HEK293 (cell line): ENCODE measurements at regions of chr2 and their contacts with region 1.

Region 1: GRCh38 chr2:190849774-190850173 is 30.8 kb upstream of the GLS start:
- H3K4me3 ChIP-seq: no peak overlapping the region
- H3K27ac ChIP-seq: no peak overlapping the region
- H3K4me1 ChIP-seq: peaks cover 3% of the 10 kb centered on the region; the same call in 1 of the 2 replicates
- CTCF ChIP-seq: no peak

Region 2: GRCh38 chr2:190636373-190636772 is 213.4 kb before region 1 on chr2:
- CTCF ChIA-PET with region 1: no interaction called
- POLR2A ChIA-PET with region 1: no interaction called
- H3K4me3 ChIP-seq: no peak overlapping the region
- H3K27ac ChIP-seq: no peak overlapping the region
- H3K4me1 ChIP-seq: 0 out of 2 replicates have a peak, but pooled peaks cover 2% of the 10 kb centered on the region
- CTCF ChIP-seq: no peak

Region 3: GRCh38 chr2:190679813-190680591 is 169.8 kb before region 1 on chr2:
- CTCF ChIA-PET with region 1: no interaction called
- POLR2A ChIA-PET with region 1: no interaction called
- H3K4me3 ChIP-seq: no peak overlapping the region
- H3K27ac ChIP-seq: no peak overlapping the region
- H3K4me1 ChIP-seq: peaks cover 14% of the 10 kb centered on the region
- CTCF ChIP-seq: 0 out of 2 replicates have a peak, but pooled peaks have one; percentile 46

Region 4: GRCh38 chr2:190838492-190838910 is 11.3 kb before region 1 on chr2:
- CTCF ChIA-PET with region 1: interaction called, 13 read pairs
- POLR2A ChIA-PET with region 1: no interaction called
- H3K4me3 ChIP-seq: no peak overlapping the region
- H3K27ac ChIP-seq: no peak overlapping the region
- H3K4me1 ChIP-seq: peaks cover 7% of the 10 kb centered on the region; the same call in 1 of the 2 replicates
- CTCF ChIP-seq: no peak

Region 5: GRCh38 chr2:190863946-190864345 is 14.2 kb after region 1 on chr2:
- CTCF ChIA-PET with region 1: interaction called, 21 read pairs
- POLR2A ChIA-PET with region 1: interaction called, 3 read pairs
- H3K4me3 ChIP-seq: no peak overlapping the region
- H3K27ac ChIP-seq: no peak overlapping the region
- H3K4me1 ChIP-seq: peaks cover 4% of the 10 kb centered on the region; the same call in 1 of the 2 replicates
- CTCF ChIP-seq: no peak

Region 6: GRCh38 chr2:190880378-190881073 is 30.8 kb after region 1 on chr2 and contains the start of gene GLS:
- CTCF ChIA-PET with region 1: interaction called, 12 read pairs
- POLR2A ChIA-PET with region 1: interaction called, 13 read pairs
- H3K4me3 ChIP-seq: peak within 1 kb of the TSS; percentile 94
- H3K27ac ChIP-seq: peak within 1 kb of the TSS; percentile 91
- H3K4me1 ChIP-seq: peaks cover 2% of the 10 kb centered on the region; the same call in 1 of the 2 replicates
- CTCF ChIP-seq: peak; percentile 29; the same call in 1 of the 2 replicates

Region 7: GRCh38 chr2:190947711-190948251 is 98.0 kb after region 1 on chr2:
- CTCF ChIA-PET with region 1: interaction called, 11 read pairs
- POLR2A ChIA-PET with region 1: no interaction called
- H3K4me3 ChIP-seq: peak overlapping the region; percentile 6; the same call in 1 of the 2 replicates
- H3K27ac ChIP-seq: peak overlapping the region; percentile 29; the same call in 1 of the 2 replicates
- H3K4me1 ChIP-seq: peaks cover 6% of the 10 kb centered on the region
- CTCF ChIP-seq: no peak